ENCODE measurements at regions of chr5 and their contacts with region 1.

Region 1: DNA sequence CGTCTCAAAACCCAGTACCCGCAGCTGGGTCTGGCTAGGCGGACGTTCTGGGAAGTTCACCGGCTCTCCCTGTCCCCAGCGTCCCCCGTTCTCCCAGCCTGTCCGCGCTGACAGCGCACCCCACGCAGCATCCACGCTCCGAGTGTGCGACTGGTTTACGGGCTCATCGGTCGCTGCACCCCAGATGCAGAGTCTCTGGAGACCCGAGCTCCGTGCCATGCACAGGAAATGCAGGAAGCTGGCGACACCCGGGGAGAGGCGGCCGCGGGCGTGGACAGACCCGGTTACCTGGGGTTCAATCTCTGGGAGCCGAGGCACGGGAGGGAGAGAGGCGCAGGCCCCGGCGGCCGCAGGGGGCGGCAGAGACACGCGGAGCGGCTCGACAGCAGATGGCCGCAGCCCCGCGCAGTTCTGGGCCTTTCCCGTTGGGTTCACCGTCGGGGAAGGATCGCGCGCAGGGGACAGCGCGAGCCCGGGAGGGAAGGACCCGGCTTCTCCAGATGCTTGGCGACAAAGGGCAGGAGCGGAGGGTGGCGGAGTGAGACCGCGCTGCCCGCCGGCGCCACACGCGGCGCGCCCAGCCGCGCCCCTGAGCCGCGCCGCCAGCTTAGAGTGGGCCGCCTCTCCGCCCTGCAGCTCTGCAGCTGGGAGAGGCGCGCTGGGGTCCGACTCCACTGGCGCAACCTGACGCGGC is 558 bp downstream of the SHROOM1 start:
- DNase-seq: peak; percentile 82
- H3K4me3 ChIP-seq: peak overlapping the region; percentile 55 to 74
- H3K27ac ChIP-seq: peak overlapping the region; percentile 90 to 95
- H3K4me1 ChIP-seq: peaks cover 12% of the 10 kb centered on the region
- H3K27me3 ChIP-seq: no peaks in the 10 kb centered on the region
- CTCF ChIP-seq: peak; percentile 86 to 94 (median 90)
- POLR2A ChIP-seq: no peak

Region 2: DNA sequence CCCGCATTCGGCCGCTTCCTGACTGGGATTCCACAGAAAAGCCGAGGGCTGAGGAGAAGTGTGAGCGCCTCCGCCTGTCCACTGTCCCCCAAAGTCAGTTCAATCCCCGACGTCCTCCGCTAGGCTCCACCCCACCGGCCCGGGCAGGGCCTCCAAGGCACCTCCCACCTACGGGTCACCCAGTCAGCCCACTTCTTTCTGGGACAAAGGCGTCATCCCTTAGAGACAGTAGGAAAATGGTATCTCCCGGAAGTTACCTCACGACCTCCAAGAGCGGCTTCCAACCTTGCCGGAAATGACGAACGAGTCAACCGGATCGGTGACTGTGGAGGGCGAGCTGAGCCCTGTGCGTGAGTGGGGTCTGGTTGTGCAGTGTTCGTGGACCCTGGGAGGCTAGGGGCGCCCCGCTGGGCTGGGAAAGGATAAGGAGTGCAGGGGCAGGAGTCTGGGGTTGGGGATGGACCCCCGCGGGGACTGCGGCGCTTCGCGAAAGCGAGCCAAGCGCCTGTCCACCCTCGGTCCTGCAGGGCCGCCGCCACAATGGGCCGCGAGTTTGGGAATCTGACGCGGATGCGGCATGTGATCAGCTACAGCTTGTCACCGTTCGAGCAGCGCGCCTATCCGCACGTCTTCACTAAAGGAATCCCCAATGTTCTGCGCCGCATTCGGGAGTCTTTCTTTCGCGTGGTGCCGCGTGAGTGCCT is 36.6 kb after region 1 on chr5 and contains the starts of genes GDF9 and UQCRQ:
- intact Hi-C with region 1: loop called (anchors 5 kb)
- DNase-seq: peak; percentile 98
- H3K4me3 ChIP-seq: peak within 1 kb of the TSS; percentile 73 to 87
- H3K27ac ChIP-seq: peak within 1 kb of the TSS; percentile 94
- H3K4me1 ChIP-seq: peaks cover 5% of the 10 kb centered on the region
- H3K27me3 ChIP-seq: no peaks in the 10 kb centered on the region
- CTCF ChIP-seq: peak in 3 of 4 experiments; percentile 40 to 61 (median 45)
- POLR2A ChIP-seq: peak; percentile 89
- total RNA-seq, gene GDF9: 0.09 to 3.2 TPM
- total RNA-seq, gene UQCRQ: 201 to 223 TPM

Region 3: GRCh38 chr5:132883261-132883834 is 53.5 kb after region 1 on chr5:
- intact Hi-C with region 1: loop called (anchors 2 kb)
- DNase-seq: peak; percentile 66
- H3K4me3 ChIP-seq: no peak overlapping the region
- H3K27ac ChIP-seq: no peak overlapping the region
- H3K4me1 ChIP-seq: no peaks in the 10 kb centered on the region
- H3K27me3 ChIP-seq: no peaks in the 10 kb centered on the region
- CTCF ChIP-seq: peak in 3 of 4 experiments; percentile 67 to 76 (median 73)
- POLR2A ChIP-seq: no peak